Activated CD4-positive, alpha-beta memory T cell treated with anti-CD3 and anti-CD28 coated beads for 36 hours (primary cell): ENCODE measurements at regions of chr7 and their contacts with region 1.

Region 1: DNA sequence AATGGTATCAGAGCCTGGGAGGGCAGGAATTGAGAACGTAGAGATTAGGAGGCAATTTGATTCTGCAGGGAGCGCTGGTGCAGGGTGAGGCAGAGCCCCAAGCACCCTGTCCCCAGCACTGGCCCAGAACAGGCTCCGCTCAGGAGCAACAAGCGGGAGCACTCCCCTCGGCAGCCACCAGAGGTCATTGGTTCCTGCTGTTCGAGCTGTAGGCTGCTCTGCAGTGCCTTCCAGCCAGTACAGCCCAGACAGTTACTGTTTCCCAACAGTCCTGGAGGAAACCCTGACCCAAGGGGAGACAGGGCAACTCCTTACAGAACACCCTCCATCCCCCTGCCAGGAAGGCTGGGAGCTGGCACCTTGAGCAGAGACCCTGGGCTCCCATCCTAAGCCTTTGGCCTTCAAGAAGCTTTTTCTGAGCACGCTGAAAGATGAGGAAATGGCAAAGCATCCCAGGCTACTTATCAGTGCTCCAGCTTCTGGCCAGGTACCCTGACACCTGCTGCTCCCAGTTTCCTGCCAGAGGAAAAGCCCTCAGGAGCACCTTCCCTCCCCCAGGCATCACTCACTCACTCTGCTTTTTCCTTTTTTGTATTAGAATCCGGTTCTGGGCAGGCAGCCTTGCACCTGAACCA is 71.2 kb upstream of the EFCAB10 start:
- DNase-seq: peak; percentile 75
- H3K4me3 Mint-ChIP-seq: no peak overlapping the region
- H3K27ac Mint-ChIP-seq: no peak overlapping the region
- H3K4me1 Mint-ChIP-seq: peaks cover 10% of the 10 kb centered on the region
- H3K27me3 Mint-ChIP-seq: no peaks in the 10 kb centered on the region

Region 2: GRCh38 chr7:105512415-105512814 is 140.1 kb before region 1 on chr7:
- CTCF ChIA-PET with region 1: no interaction called
- POLR2A ChIA-PET with region 1: no interaction called
- intact Hi-C with region 1: no loop called
- DNase-seq: no peak
- H3K4me3 Mint-ChIP-seq: no peak overlapping the region
- H3K27ac Mint-ChIP-seq: peak overlapping the region; percentile 9
- H3K4me1 Mint-ChIP-seq: peaks cover 23% of the 10 kb centered on the region
- H3K27me3 Mint-ChIP-seq: no peaks in the 10 kb centered on the region

Region 3: GRCh38 chr7:105625986-105626385 is 26.5 kb before region 1 on chr7:
- CTCF ChIA-PET with region 1: no interaction called
- POLR2A ChIA-PET with region 1: no interaction called
- intact Hi-C with region 1: no loop called
- DNase-seq: no peak
- H3K4me3 Mint-ChIP-seq: no peak overlapping the region
- H3K27ac Mint-ChIP-seq: no peak overlapping the region
- H3K4me1 Mint-ChIP-seq: no peaks in the 10 kb centered on the region
- H3K27me3 Mint-ChIP-seq: no peaks in the 10 kb centered on the region

Region 4: DNA sequence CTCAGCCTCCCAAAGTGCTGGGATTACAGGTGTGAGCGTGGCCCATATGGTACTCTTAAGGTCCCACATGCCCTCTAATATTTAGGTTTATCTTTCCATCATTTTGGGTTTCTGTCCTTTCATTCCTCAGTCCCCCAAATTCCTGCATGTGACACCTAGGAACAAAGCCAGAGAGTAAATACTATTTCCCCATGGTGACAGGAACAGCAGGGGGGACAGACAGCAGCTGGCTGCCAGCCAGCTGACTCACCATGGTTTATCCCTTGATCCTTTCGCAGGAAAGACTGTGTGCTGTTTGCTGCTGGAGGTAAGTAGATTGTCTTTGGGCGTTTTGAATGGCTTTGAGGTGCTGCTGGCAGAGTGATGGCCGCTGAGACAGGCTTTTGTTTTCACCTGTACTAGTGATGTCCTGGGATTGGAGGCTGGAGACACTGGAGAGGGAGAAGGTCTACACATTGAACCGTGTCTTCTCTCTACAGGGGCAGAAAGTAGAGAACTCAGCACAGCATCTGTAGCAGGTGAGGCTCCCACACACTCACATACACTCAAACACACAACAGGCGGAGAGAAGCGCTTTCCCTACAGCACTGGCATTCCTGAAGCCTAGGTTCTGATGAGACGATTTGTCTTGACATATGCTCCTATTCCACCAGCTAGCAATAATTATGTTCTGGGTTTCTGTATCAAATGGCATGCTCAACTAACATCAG is 12.5 kb after region 1 on chr7:
- CTCF ChIA-PET with region 1: interaction called, 17 read pairs
- POLR2A ChIA-PET with region 1: no interaction called
- intact Hi-C with region 1: no loop called
- DNase-seq: no peak
- H3K4me3 Mint-ChIP-seq: no peak overlapping the region
- H3K27ac Mint-ChIP-seq: no peak overlapping the region
- H3K4me1 Mint-ChIP-seq: peaks cover 2% of the 10 kb centered on the region
- H3K27me3 Mint-ChIP-seq: no peaks in the 10 kb centered on the region

Region 5: GRCh38 chr7:105678811-105679495 is 26.5 kb after region 1 on chr7:
- CTCF ChIA-PET with region 1: interaction called, 22 read pairs
- POLR2A ChIA-PET with region 1: interaction called, 3 read pairs
- intact Hi-C with region 1: no loop called
- DNase-seq: peak; percentile 54
- H3K4me3 Mint-ChIP-seq: peak overlapping the region; percentile 78
- H3K27ac Mint-ChIP-seq: peak overlapping the region; percentile 95
- H3K4me1 Mint-ChIP-seq: peaks cover 75% of the 10 kb centered on the region
- H3K27me3 Mint-ChIP-seq: no peaks in the 10 kb centered on the region

Region 6: DNA sequence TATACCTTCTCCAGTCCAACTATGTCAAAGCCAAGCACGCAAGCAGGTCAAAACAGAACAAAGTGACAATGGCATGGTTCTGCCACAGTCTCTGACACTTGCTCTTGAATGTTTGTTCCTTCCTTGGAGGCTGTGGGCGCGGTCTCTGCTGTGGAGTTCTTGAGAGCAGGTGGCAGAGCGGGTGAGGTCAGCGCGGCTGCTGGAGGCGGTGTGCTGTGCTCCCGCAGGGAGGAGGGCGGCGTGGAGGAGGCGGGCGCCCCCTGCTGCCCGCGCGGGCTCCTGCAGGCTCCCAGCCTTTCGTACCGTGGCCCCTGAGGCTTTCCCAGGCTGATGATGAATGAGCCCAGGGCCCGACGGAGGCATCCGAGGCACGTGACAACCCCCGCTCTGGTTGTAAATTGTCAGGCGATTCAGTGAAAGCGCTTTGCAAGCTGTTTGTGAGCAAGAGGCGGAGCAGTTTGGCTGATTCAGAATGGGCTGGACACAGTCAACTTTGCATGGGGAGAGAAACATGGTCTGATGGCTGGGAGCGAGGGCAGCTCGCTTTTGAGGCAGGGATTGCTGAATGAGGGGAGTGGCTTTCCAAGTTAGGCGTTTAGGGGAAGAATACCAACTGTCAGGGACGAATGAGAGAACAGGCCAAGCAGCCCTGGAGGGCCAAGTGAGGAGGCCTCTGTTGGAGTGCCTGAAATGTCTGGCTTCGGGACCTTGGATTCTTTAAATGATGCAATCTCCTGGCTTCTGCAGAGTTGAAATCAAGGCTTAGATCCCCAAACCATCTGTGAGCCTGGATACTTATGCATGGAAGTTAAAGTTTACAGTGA is 357.1 kb after region 1 on chr7:
- CTCF ChIA-PET with region 1: interaction called, 9 read pairs
- POLR2A ChIA-PET with region 1: no interaction called
- intact Hi-C with region 1: loop called (anchors 1 kb)
- DNase-seq: peak; percentile 91
- H3K4me3 Mint-ChIP-seq: no peak overlapping the region
- H3K27ac Mint-ChIP-seq: no peak overlapping the region
- H3K4me1 Mint-ChIP-seq: peaks cover 24% of the 10 kb centered on the region
- H3K27me3 Mint-ChIP-seq: peaks cover 2% of the 10 kb centered on the region

Region 7: GRCh38 chr7:106041140-106041717 is 388.8 kb after region 1 on chr7:
- CTCF ChIA-PET with region 1: interaction called, 43 read pairs
- POLR2A ChIA-PET with region 1: no interaction called
- intact Hi-C with region 1: loop called (anchors 2 kb)
- DNase-seq: peak; percentile 52
- H3K4me3 Mint-ChIP-seq: no peak overlapping the region
- H3K27ac Mint-ChIP-seq: no peak overlapping the region
- H3K4me1 Mint-ChIP-seq: peaks cover 23% of the 10 kb centered on the region
- H3K27me3 Mint-ChIP-seq: peaks cover 2% of the 10 kb centered on the region